ENCODE measurements at regions of chr11 and their contacts with region 1.

Region 1: DNA sequence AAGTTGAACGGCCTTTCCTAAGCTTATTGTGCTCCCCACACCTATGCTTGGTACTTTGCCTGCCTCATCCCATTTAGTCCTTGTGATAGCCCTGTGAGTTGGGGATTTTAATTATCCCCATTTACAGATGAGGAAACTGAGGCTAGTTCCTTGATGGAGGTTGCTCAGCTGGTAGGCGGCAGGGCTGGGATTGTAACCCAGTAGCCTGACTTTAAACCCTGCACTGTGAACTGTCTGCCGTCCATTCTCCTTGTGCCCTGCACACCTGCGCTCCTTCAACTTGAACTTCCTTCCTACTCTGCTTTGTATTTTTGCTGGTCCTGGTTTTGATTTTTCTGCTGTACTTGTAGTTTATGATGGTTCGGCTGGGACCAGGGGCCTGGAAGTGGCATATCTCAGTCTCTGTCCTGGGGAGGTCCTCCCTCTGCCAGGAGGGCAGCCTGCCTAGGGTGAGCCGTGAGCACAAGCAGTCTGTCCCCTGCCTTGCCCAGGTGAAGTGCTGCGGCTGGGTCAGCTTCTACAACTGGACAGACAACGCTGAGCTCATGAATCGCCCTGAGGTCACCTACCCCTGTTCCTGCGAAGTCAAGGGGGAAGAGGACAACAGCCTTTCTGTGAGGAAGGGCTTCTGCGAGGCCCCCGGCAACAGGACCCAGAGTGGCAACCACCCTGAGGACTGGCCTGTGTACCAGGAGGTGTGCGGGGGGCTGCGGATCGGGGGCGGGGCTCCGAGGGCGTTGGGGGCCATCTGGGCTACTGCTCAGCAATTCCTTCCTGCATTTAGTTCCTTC is 52.4 kb downstream of the CD82 start:
- DNase-seq: no peak

Region 2: GRCh38 chr11:44065841-44066731 is 551.8 kb before region 1 on chr11 and contains the start of gene ACCS:
- CTCF ChIA-PET with region 1: no interaction called
- POLR2A ChIA-PET with region 1: no interaction called
- DNase-seq: peak; percentile 87

Region 3: GRCh38 chr11:44519989-44520737 is 97.7 kb before region 1 on chr11:
- CTCF ChIA-PET with region 1: interaction called, 10 read pairs
- POLR2A ChIA-PET with region 1: no interaction called
- DNase-seq: no peak

Region 4: GRCh38 chr11:44530413-44531115 is 87.3 kb before region 1 on chr11:
- CTCF ChIA-PET with region 1: no interaction called
- POLR2A ChIA-PET with region 1: no interaction called
- DNase-seq: no peak

Region 5: GRCh38 chr11:44556735-44557409 is 61.0 kb before region 1 on chr11:
- CTCF ChIA-PET with region 1: interaction called, 55 read pairs
- POLR2A ChIA-PET with region 1: no interaction called
- DNase-seq: no peak

Measured in HEK293T (cell line).